Activated naive CD4-positive, alpha-beta T cell treated with anti-CD3 and anti-CD28 coated beads for 36 hours (primary cell): ENCODE measurements at regions of chr3 and their contacts with region 1.

Region 1: GRCh38 chr3:119676771-119677640 is at the start of gene COX17:
- DNase-seq: peak; percentile 97
- H3K4me3 Mint-ChIP-seq: peak within 1 kb of the TSS; percentile 82
- H3K27ac Mint-ChIP-seq: peak within 1 kb of the TSS; percentile 95
- H3K4me1 Mint-ChIP-seq: peaks cover 31% of the 10 kb centered on the region
- H3K27me3 Mint-ChIP-seq: no peaks in the 10 kb centered on the region
- total RNA-seq, gene COX17: 104 to 113 TPM

Region 2: DNA sequence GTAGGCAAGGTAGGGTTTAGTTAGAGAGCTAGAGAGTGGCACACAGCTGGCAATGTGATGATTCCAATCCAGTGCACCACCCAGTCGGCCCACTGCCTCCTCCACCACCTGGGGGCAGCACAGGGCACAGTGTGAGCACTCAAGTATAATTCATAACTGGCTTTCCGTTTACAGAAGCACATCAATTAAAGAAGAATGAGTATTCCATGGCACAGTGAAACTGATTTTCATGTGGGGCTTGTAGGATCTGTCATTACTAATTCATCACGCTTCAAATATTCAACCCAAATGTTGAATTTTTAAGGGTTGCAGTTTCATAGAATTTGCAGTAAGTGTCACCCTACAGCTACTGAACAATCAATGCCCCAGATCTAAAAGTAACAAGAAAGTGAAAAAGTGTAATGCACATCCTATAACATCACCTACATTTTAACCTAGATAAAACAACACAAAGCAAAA is 792.2 kb before region 1 on chr3:
- CTCF ChIA-PET with region 1: interaction called, 8 read pairs
- intact Hi-C with region 1: loop called (anchors 1 kb)
- DNase-seq: peak; percentile 89
- H3K4me3 Mint-ChIP-seq: no peak overlapping the region
- H3K27ac Mint-ChIP-seq: no peak overlapping the region
- H3K4me1 Mint-ChIP-seq: no peaks in the 10 kb centered on the region
- H3K27me3 Mint-ChIP-seq: peaks cover 8% of the 10 kb centered on the region

Region 3: DNA sequence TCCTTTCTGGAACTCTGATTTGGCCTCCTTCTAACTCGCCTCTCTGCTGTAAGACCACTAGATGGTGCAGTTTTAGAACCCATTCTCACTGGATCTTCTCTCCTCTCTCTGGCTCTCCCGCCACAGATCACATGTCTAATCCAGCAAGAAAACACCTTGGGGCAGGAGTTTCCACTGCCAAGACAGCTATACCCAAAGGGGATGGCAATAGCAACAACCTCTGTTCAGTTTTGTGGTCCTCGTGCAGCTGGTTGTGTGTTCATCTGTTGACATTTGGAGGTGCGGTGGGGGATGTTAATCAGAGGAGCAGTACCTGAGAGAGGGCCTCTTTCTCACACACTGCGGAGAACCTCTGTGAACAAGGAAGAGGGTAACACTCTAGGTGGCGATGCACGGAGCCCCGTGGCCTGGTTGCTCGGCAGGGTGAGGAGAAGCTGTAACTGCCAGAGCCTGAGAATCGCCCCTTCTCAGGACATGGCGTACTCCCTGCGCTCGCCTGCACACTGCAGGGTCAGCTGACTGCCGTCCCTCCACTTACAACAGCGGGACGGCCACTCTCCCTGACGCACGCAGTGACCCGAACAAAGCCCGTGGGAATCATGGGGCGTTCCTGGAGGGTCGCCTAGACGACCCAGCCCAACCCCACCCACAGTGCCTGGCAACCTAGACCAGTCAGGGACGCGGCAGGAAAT is 531.4 kb before region 1 on chr3 and contains the start of gene TEX55:
- CTCF ChIA-PET with region 1: interaction called, 6 read pairs
- intact Hi-C with region 1: loop called (anchors 1 kb)
- DNase-seq: peak; percentile 31
- H3K4me3 Mint-ChIP-seq: no peak within 1 kb of the TSS
- H3K27ac Mint-ChIP-seq: no peak within 1 kb of the TSS
- H3K4me1 Mint-ChIP-seq: peaks cover 5% of the 10 kb centered on the region
- H3K27me3 Mint-ChIP-seq: no peaks in the 10 kb centered on the region
- total RNA-seq, gene TEX55: not detected

Region 4: DNA sequence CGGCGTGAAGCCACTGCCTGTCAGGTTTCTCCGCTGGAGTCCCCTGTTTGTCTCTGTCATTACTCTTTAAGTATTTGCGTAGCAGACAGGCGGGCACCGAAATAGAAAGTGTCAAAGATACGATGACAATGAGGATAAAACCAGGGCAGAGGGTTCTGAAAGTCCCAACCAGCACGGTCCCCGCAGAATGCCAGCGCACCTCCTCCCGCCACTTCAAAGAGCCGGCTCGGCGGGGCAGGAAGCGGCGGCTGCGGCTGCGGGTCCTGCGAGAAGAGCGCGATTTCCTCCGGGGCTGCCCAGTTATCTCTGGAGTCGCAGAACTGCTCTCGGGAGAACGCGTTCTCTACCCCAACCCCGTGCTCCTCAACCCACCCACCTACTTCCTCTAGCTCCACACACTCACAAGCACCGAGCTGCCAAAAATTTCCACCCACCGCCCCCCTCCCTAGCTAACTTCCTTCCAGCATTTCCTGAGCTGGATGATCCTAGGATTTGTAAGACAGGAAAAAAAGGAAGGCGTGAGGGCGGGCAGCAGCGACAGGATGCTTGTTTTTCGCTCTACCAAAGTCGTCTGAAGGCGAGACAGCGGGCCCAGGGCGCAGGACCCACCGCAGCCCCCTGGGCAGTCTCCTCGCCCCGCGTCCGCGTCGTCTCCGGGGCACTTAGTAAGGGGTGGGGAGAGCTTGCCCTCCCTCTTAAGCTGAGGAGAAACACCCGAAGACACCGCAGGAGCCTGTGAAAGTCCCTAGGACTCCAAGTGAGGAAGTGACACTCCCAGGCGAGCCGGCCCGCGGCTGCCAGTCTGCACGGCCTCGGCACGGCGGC is 382.9 kb before region 1 on chr3 and contains the start of gene ARHGAP31:
- CTCF ChIA-PET with region 1: no interaction called
- intact Hi-C with region 1: loop called (anchors 1 kb)
- DNase-seq: peak; percentile 94
- H3K4me3 Mint-ChIP-seq: peak within 1 kb of the TSS; percentile 82
- H3K27ac Mint-ChIP-seq: peak within 1 kb of the TSS; percentile 92
- H3K4me1 Mint-ChIP-seq: peaks cover 36% of the 10 kb centered on the region
- H3K27me3 Mint-ChIP-seq: no peaks in the 10 kb centered on the region
- total RNA-seq, gene ARHGAP31: 3.5 to 3.7 TPM

Region 5: GRCh38 chr3:119469381-119470189 is 207.4 kb before region 1 on chr3:
- CTCF ChIA-PET with region 1: interaction called, 4 read pairs
- intact Hi-C with region 1: loop called (anchors 1 kb)
- DNase-seq: no peak
- H3K4me3 Mint-ChIP-seq: peak overlapping the region; percentile 85
- H3K27ac Mint-ChIP-seq: peak overlapping the region; percentile 90
- H3K4me1 Mint-ChIP-seq: peaks cover 31% of the 10 kb centered on the region
- H3K27me3 Mint-ChIP-seq: no peaks in the 10 kb centered on the region

Region 6: GRCh38 chr3:119579366-119580165 is 97.4 kb before region 1 on chr3 and contains the start of gene ADPRH:
- CTCF ChIA-PET with region 1: interaction called, 4 read pairs
- intact Hi-C with region 1: loop called (anchors 1 kb)
- DNase-seq: peak; percentile 66
- H3K4me3 Mint-ChIP-seq: peak within 1 kb of the TSS; percentile 86
- H3K27ac Mint-ChIP-seq: peak within 1 kb of the TSS; percentile 54
- H3K4me1 Mint-ChIP-seq: peaks cover 15% of the 10 kb centered on the region
- H3K27me3 Mint-ChIP-seq: peaks cover 18% of the 10 kb centered on the region
- total RNA-seq, gene ADPRH: 2.6 to 3.1 TPM

Region 7: DNA sequence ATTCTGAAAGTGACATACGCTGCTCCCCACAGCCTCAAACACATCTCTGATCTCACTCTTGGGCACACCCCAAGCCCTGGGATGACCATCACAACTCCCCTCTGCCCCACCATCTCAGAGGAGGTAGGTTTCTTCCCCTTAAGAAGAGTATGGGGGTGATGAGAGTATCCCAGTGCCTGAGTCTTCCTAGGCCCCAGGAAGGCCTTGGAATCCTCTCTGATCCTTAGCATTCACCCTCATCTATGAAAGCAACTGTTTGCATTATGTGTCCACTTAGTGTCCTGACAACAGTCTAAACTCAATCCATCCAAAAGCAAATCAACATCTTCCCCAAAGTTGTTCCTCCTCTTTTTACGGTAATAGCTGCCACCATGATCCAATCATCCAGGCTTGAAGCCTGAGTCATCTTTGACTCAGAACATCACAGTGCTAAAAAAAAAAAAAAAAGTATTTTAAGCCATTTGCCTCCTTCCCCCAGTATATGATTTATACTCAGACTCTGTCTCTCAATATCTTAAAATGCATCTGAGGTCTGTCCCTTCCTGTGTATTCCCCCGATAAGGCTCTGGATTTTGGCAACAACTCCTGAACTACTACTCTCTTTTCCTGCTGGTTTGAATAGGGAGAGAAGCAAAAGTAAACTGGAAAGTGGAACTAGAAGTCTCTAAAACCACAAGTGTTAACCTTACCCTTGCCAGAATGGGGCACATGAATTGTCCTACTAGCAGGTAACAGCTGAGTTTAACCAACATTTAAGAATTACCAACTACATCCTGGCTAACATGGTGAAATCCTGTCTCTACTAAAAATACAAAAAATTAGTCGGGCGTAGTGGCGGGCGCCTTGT is 39.1 kb before region 1 on chr3:
- CTCF ChIA-PET with region 1: no interaction called
- intact Hi-C with region 1: loop called (anchors 1 kb)
- DNase-seq: peak; percentile 19
- H3K4me3 Mint-ChIP-seq: no peak overlapping the region
- H3K27ac Mint-ChIP-seq: peak overlapping the region; percentile 91
- H3K4me1 Mint-ChIP-seq: peaks cover 36% of the 10 kb centered on the region
- H3K27me3 Mint-ChIP-seq: no peaks in the 10 kb centered on the region

Region 8: DNA sequence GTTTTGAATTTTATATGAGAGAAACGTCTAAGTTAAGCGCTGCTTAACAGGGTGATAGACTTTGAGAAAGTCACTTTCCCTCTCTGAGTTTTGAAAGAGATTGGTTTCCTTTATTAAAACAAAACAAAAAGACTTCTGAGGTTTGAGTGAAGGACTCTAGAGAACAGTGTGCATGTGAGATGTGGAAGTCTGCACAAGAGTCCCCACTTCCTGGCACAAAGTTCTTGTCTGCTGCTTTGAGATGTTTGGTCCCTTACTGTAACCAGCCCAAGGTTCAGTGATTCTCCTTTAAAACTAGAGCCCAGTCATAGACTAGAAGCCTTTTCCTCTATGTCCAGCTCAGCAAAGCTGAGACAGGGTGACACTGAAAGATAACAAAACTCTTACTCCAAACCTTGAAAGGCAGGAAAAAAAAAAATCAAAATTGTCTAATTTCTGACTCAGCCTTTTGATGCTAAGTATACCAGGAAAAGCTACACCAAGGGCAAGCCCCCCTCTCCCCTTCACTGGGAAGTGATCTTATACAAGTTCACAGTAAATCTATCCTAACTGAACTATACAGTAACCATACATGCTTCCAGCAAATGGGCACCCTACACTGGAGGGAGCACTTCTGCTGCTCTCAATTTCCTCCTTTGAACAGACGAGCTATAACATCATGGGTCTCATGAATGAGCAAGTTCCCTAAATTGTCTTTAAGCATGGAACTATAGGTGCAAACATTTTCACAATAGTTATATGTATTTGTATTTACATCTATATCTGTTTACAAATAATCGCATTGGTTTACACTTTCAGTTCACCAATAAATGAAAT is 18.9 kb before region 1 on chr3:
- CTCF ChIA-PET with region 1: no interaction called
- intact Hi-C with region 1: no loop called
- DNase-seq: no peak
- H3K4me3 Mint-ChIP-seq: no peak overlapping the region
- H3K27ac Mint-ChIP-seq: no peak overlapping the region
- H3K4me1 Mint-ChIP-seq: no peaks in the 10 kb centered on the region
- H3K27me3 Mint-ChIP-seq: no peaks in the 10 kb centered on the region